ENCODE measurements at regions of chr5 and their contacts with region 1.

Region 1: GRCh38 chr5:52787600-52788504 is at the starts of genes ITGA1 and PELO:
- DNase-seq: peak; percentile 52
- H3K4me3 Mint-ChIP-seq: peak within 1 kb of the TSS; percentile 81
- H3K27ac Mint-ChIP-seq: no peak within 1 kb of the TSS
- H3K4me1 Mint-ChIP-seq: peaks cover 19% of the 10 kb centered on the region
- H3K27me3 Mint-ChIP-seq: peaks cover 26% of the 10 kb centered on the region
- total RNA-seq, gene ITGA1: 4.9 to 8.0 TPM
- total RNA-seq, gene PELO: 20.6 TPM

Region 2: GRCh38 chr5:52710310-52710971 is 77.4 kb before region 1 on chr5:
- CTCF ChIA-PET with region 1: no interaction called
- POLR2A ChIA-PET with region 1: no interaction called
- DNase-seq: no peak
- H3K4me3 Mint-ChIP-seq: peak overlapping the region; percentile 33
- H3K27ac Mint-ChIP-seq: peak overlapping the region; percentile 88
- H3K4me1 Mint-ChIP-seq: peaks cover 65% of the 10 kb centered on the region
- H3K27me3 Mint-ChIP-seq: no peaks in the 10 kb centered on the region

Region 3: GRCh38 chr5:52760695-52761366 is 27.0 kb before region 1 on chr5:
- CTCF ChIA-PET with region 1: no interaction called
- POLR2A ChIA-PET with region 1: no interaction called
- DNase-seq: no peak
- H3K4me3 Mint-ChIP-seq: no peak overlapping the region
- H3K27ac Mint-ChIP-seq: no peak overlapping the region
- H3K4me1 Mint-ChIP-seq: no peaks in the 10 kb centered on the region
- H3K27me3 Mint-ChIP-seq: no peaks in the 10 kb centered on the region

Region 4: DNA sequence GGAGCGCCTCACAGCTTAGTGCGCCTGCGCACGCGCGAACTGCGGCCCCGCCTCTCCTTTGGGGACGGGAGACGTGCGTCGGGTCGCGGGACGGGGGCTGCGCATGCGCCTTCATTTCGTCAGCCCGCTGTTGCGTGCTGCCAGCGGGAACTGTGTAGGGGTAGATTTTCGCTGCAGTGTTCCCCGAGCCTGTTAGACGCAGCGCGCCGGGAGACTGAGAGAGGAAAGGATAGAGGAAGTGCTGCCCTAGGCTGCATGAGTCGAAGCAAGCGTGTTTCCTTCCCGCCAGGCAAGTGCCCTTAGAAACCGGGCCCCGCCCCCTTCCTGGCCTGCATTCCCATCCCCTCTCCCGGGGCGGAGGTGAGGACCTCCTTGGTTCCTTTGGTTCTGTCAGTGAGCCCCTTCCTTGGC is 12.1 kb after region 1 on chr5:
- CTCF ChIA-PET with region 1: interaction called, 8 read pairs
- POLR2A ChIA-PET with region 1: interaction called, 32 read pairs
- DNase-seq: peak; percentile 96
- H3K4me3 Mint-ChIP-seq: peak overlapping the region; percentile 97
- H3K27ac Mint-ChIP-seq: peak overlapping the region; percentile 97
- H3K4me1 Mint-ChIP-seq: peaks cover 51% of the 10 kb centered on the region
- H3K27me3 Mint-ChIP-seq: peaks cover 5% of the 10 kb centered on the region

Region 5: DNA sequence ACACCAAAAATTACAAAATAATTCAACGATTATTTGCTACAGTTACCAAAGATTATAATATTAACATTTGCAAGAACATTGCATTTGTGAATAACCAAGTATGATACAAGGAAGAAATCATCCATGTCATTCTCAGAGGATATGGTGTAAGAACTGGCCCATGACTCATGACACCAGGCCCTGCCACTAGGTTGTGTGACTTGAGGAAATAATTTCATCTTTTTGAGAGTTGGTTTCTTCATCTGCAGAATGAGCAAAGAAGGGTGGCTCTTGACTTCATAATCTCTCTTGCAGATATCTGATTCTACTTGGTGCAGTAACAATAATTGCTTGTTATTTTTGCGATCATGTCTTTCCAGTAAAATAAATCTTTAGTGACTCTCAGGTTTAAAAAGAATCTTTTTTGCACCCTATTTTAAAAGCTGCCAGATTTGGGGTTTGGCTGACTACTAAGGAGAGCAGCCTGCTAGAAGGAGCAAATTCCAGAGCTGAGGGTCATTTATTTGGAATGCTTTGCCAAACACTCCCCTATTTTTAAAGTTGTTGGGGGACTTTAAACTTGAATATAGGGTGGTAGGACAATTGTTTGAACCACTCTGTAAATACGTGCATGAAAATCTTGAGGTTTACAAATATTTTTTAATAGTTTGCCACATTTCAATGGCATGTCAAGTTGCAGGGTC is 23.4 kb after region 1 on chr5:
- CTCF ChIA-PET with region 1: no interaction called
- POLR2A ChIA-PET with region 1: no interaction called
- DNase-seq: no peak
- H3K4me3 Mint-ChIP-seq: no peak overlapping the region
- H3K27ac Mint-ChIP-seq: no peak overlapping the region
- H3K4me1 Mint-ChIP-seq: peaks cover 18% of the 10 kb centered on the region
- H3K27me3 Mint-ChIP-seq: no peaks in the 10 kb centered on the region